Dorsolateral prefrontal cortex (tissue), 120 donors: ENCODE measurements at regions of chr14 and their contacts with region 1.

Region 1: GRCh38 chr14:96100161-96101029 is 61.2 kb downstream of the C14orf132 start:
- DNase-seq: peak; percentile 68 to 85 (median 82)
- H3K4me3 ChIP-seq: peak overlapping the region in 5 of 59 donors; percentile 5 to 31 (median 24)
- H3K27ac ChIP-seq: peak overlapping the region in 38 of 59 donors; percentile 1 to 84 (median 61)
- H3K27me3 ChIP-seq: no peaks in the 10 kb centered on the region
- CTCF ChIP-seq: peak; percentile 63 to 98 (median 93)

Region 2: GRCh38 chr14:95993768-95994592 is 106.4 kb before region 1 on chr14:
- intact Hi-C with region 1: loop called (anchors 1 to 2 kb)
- DNase-seq: peak in 3 of 10 donors; percentile 15 to 39 (median 17)
- H3K4me3 ChIP-seq: no peak overlapping the region
- H3K27ac ChIP-seq: no peak overlapping the region
- H3K27me3 ChIP-seq: peaks cover 0 to 17% (median 0%) of the 10 kb centered on the region in 45 donors
- CTCF ChIP-seq: peak; percentile 77 to 99 (median 91)

Region 3: GRCh38 chr14:96146131-96146806 is 45.9 kb after region 1 on chr14:
- intact Hi-C with region 1: loop called in 1 of 2 experiments (anchors 2 kb)
- DNase-seq: peak in 9 of 10 donors; percentile 9 to 79 (median 63)
- H3K4me3 ChIP-seq: peak overlapping the region in 1 of 59 donors; percentile 3
- H3K27ac ChIP-seq: peak overlapping the region in 53 of 59 donors; percentile 0 to 94 (median 71)
- H3K27me3 ChIP-seq: peaks cover 0 to 3% (median 0%) of the 10 kb centered on the region in 45 donors
- CTCF ChIP-seq: peak in 25 of 56 donors; percentile 1 to 53 (median 26)

Region 4: GRCh38 chr14:96275177-96276112 is 175.1 kb after region 1 on chr14:
- intact Hi-C with region 1: loop called (anchors 1 kb)
- DNase-seq: peak; percentile 78 to 88 (median 84)
- H3K4me3 ChIP-seq: peak overlapping the region in 29 of 59 donors; percentile 3 to 46 (median 25)
- H3K27ac ChIP-seq: peak overlapping the region; percentile 18 to 98 (median 87)
- H3K27me3 ChIP-seq: no peaks in the 10 kb centered on the region
- CTCF ChIP-seq: peak; percentile 88 to 99 (median 98)

Region 5: GRCh38 chr14:96741151-96741977 is 641.0 kb after region 1 on chr14:
- intact Hi-C with region 1: loop called in 1 of 2 experiments (anchors 5 kb)
- DNase-seq: peak; percentile 33 to 84 (median 57)
- H3K4me3 ChIP-seq: peak overlapping the region; percentile 22 to 74 (median 56)
- H3K27ac ChIP-seq: peak overlapping the region in 2 of 59 donors; percentile 22 to 30
- H3K27me3 ChIP-seq: peaks cover 0 to 62% (median 31%) of the 10 kb centered on the region in 45 donors
- CTCF ChIP-seq: peak; percentile 63 to 95 (median 88)